ENCODE measurements at regions of chr4 and their contacts with region 1.

Region 1: GRCh38 chr4:25117274-25117673 is 43.0 kb downstream of the SEPSECS start:
- DNase-seq: no peak
- ATAC-seq: no peak
- H3K4me3 ChIP-seq: no peak overlapping the region
- H3K4me3 Mint-ChIP-seq: no peak overlapping the region
- H3K27ac ChIP-seq: no peak overlapping the region
- H3K27ac Mint-ChIP-seq: no peak overlapping the region
- H3K4me1 ChIP-seq: no peaks in the 10 kb centered on the region
- H3K4me1 Mint-ChIP-seq: no peaks in the 10 kb centered on the region
- H3K27me3 ChIP-seq: no peaks in the 10 kb centered on the region
- H3K27me3 Mint-ChIP-seq: no peaks in the 10 kb centered on the region
- CTCF ChIP-seq: no peak

Region 2: DNA sequence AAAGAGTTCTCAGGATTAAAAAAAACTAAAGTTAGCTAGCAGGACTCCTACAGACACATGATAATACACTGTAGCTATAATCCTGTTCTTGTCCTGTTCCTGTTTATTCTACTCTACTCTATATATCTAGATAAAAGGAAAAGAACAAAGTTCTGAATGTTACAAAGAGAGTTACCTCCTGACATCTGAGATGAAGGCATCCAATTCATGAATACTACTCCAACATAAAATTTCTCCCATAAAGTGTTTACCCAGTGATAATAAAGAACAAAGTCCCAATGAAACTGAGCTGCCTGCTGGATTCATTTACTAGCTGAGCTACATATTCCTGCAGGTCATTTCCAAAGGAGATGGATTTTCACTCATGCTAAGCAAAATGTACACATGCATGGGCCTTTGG is 15.9 kb after region 1 on chr4:
- CTCF ChIA-PET with region 1: no interaction called
- POLR2A ChIA-PET with region 1: no interaction called
- intact Hi-C with region 1: loop called in 1 of 2 experiments (anchors 1 kb)
- DNase-seq: no peak
- ATAC-seq: no peak
- H3K4me3 ChIP-seq: no peak overlapping the region
- H3K4me3 Mint-ChIP-seq: no peak overlapping the region
- H3K27ac ChIP-seq: no peak overlapping the region
- H3K27ac Mint-ChIP-seq: no peak overlapping the region
- H3K4me1 ChIP-seq: no peaks in the 10 kb centered on the region
- H3K4me1 Mint-ChIP-seq: peaks cover 5% of the 10 kb centered on the region
- H3K27me3 ChIP-seq: no peaks in the 10 kb centered on the region
- H3K27me3 Mint-ChIP-seq: no peaks in the 10 kb centered on the region
- CTCF ChIP-seq: no peak

Region 3: DNA sequence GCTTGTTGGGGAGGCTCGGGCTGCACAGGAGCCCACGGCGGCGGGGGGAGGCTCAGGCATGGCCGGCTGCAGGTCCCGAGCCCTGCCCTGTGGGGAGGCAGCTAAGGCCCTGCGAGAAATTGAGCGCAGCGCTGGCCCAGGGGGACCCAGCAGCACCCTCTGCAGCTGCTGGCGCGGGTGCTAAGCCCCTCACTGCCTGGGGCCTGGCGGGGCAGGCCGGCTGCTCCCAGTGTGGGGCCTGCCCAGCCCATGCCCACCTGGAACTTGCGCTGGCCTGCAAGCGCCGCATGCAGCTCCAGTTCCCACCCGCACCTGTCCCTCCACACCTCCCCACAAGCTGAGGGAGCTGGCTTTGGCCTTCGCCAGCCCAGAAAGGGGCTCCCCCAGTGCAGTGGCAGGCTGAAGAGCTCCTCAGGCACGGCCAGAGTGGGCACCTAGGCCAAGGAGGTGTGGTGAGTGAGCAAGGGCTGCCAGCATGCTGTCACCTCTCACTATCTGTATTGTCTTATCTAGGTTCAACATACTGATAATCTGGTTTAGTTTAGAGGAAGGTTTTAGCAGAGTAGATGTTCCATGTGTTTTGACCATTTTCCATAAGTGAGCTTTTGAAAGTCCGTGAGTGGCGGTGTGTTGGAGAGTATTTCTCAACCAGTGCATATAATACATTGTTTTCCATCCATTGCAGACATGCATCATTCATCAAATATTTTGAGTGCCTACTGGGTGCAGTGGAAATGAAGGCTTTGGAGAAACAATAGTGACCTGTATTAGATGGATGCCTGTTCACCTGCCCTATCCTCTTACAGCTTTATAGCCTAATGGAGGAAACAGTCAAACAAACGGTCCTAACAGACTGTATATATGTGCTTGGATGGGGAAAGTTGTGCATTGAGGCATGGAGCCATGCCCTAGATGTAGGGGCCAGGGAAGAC is 129.7 kb after region 1 on chr4:
- CTCF ChIA-PET with region 1: no interaction called
- POLR2A ChIA-PET with region 1: no interaction called
- intact Hi-C with region 1: no loop called
- DNase-seq: no peak
- ATAC-seq: no peak
- H3K4me3 ChIP-seq: no peak overlapping the region
- H3K4me3 Mint-ChIP-seq: no peak overlapping the region
- H3K27ac ChIP-seq: no peak overlapping the region
- H3K27ac Mint-ChIP-seq: peak overlapping the region; percentile 37
- H3K4me1 ChIP-seq: no peaks in the 10 kb centered on the region
- H3K4me1 Mint-ChIP-seq: peaks cover 39% of the 10 kb centered on the region
- H3K27me3 ChIP-seq: no peaks in the 10 kb centered on the region
- H3K27me3 Mint-ChIP-seq: no peaks in the 10 kb centered on the region
- CTCF ChIP-seq: no peak

Measured in CD8-positive, alpha-beta T cell (primary cell).